ENCODE measurements at regions of chr5 and their contacts with region 1.

Region 1: DNA sequence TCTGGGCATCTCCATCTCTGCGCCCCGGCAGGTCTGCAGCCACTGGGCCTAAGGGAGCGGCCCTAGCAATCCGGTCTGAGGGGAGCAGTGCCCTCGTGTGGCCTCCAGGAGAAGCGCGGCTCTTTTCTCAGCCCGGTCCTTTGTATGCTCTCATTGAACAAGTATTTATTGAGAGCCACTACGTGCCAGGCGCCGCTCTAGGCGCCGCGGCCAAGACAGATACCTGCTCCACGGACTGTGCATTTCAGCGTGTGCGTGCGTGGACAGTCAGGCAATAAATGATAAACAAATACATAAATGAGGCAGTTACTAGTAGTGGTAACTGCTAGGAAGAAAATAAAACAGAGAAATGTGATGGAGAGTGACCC is 2.3 kb upstream of the SLC4A9 start:
- DNase-seq: no peak
- H3K4me3 ChIP-seq: peak overlapping the region; percentile 32
- CTCF ChIP-seq: peak; percentile 95

Region 2: DNA sequence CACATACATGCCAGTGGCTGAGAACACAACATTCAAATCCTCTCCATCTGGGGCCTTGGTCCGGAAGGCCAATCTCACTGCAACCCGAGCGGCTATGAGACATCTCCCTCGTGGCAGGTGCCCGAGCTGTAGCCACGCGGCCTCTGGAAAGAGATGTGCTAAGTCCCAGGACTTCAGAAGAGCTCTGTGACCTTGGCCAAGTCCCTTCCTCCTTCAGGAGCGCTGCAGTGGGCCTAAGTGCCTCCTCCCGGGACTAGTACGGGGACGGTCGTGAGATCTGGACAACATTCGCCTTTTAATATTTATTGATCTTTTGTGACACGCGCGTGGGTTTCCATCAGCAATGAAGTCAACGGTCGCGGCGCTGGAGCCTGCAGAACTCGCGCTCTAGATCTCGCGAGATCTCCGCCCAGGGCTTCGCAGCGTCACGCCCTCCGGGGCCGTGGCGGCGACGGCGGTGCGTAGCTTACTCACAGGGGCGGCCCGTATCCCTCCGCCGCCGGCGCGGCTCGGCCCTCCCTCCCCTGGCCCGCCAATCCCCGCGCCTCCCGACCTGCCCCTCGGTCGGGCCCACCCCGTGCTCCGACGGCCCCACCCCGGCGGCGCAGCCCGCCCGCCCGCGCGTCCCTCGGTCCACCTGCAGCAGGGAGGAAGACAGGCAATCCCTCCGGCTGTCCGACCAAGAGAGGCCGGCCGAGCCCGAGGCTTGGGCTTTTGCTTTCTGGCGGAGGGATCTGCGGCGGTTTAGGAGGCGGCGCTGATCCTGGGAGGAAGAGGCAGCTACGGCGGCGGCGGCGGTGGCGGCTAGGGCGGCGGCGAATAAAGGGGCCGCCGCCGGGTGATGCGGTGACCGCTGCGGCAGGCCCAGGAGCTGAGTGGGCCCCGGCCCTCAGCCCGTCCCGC is 796.7 kb before region 1 on chr5 and contains the start of gene UBE2D2:
- CTCF ChIA-PET with region 1: no interaction called
- POLR2A ChIA-PET with region 1: no interaction called
- DNase-seq: peak; percentile 86
- H3K4me3 ChIP-seq: peak within 1 kb of the TSS; percentile 68
- CTCF ChIP-seq: no peak

Region 3: GRCh38 chr5:140251527-140251973 is 106.2 kb before region 1 on chr5:
- CTCF ChIA-PET with region 1: interaction called, 1,796 read pairs
- POLR2A ChIA-PET with region 1: interaction called, 4 read pairs
- DNase-seq: peak; percentile 84
- H3K4me3 ChIP-seq: no peak overlapping the region
- CTCF ChIP-seq: no peak

Region 4: DNA sequence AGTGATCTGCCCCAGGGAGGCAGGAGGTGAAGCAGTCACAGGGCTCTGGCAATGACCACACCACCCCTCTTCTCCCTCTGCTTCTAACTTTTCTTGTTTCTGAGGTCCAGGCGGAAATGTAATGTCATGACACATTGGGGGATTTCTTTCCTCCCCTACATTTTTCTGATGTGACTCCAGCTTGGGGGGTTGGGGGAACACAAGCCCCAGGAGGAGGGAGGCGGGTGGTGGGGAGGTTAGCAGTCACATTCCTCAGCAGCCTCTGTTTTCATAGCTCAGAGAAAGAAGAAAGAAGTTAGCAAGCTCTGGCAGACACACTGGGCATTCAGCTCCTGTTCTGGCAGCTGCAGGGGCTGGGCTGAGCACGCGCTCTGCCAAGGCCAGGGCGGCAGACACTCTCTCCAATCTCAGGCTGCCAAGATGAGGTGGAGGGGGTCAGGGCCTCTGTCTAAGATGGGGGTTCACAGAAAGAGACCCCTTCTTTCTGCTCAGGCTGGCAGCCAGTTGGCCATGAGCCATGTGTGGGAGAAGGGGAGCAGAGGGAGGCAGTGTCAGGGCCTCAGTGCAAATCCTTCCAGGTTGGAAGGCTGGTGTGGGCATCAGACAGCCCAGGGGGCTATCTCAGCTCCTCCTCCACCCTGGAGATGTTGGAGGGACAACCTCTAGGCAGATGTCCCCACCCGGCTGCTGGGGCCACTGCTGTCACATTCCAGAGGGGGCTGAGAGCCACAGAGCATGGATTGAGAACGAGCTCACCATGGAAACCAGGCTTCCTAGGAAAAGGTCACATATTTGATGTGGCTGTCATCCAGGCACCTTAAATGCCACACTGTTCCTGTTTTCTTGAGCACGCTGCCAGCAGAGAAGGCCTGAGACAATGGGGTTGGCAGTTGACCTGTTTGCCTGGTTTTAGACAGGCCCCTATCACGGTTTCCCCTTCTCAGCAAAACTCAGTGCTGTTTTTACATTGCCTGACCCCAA is 34.7 kb before region 1 on chr5:
- CTCF ChIA-PET with region 1: interaction called, 26 read pairs
- POLR2A ChIA-PET with region 1: no interaction called
- DNase-seq: peak; percentile 89
- H3K4me3 ChIP-seq: peak overlapping the region; percentile 21
- CTCF ChIP-seq: no peak

Region 5: GRCh38 chr5:140408750-140409256 is 51.1 kb after region 1 on chr5:
- CTCF ChIA-PET with region 1: no interaction called
- POLR2A ChIA-PET with region 1: no interaction called
- DNase-seq: no peak
- H3K4me3 ChIP-seq: no peak overlapping the region
- CTCF ChIP-seq: no peak

Region 6: GRCh38 chr5:140420226-140420570 is 62.5 kb after region 1 on chr5:
- CTCF ChIA-PET with region 1: no interaction called
- POLR2A ChIA-PET with region 1: no interaction called
- DNase-seq: no peak
- H3K4me3 ChIP-seq: no peak overlapping the region
- CTCF ChIP-seq: no peak

Region 7: DNA sequence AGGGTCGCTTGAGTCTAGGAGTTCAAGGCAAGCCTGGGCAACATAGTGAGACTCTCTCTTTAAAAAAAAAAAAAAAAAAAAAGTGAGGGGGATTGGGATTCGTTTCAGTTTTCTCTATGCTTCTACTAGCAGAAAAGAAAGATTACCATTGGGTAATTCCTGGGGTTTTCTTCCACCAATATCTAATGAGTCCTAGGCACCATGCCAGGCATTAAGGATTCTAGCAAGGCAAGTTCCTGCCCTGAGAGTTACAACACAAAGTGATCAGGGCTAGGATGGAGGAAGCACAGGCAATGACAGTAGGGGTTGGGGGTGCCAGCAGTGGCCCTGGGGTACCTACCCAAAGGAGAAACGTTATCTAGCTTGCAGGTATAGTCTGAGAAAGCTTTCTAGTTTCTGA is 1429.7 kb after region 1 on chr5:
- CTCF ChIA-PET with region 1: no interaction called
- POLR2A ChIA-PET with region 1: no interaction called
- DNase-seq: no peak
- H3K4me3 ChIP-seq: no peak overlapping the region
- CTCF ChIP-seq: no peak

Measured in AG04449 (cell line).